Activated T-helper 1 cell treated with anti-CD3 and anti-CD28 coated beads, Interleukin-12 subunit alpha, Interleukin-12 subunit beta, Interleukin-2, Interleukin-4 antibody, amounts not matched to agents 30 ng/mL and 10 ng/mL and 1 ng/mL, durations not matched to agents 14 hours and 24 hours and 36 hours (primary cell): ENCODE measurements at regions of chr12 and their contacts with region 1.

Region 1: DNA sequence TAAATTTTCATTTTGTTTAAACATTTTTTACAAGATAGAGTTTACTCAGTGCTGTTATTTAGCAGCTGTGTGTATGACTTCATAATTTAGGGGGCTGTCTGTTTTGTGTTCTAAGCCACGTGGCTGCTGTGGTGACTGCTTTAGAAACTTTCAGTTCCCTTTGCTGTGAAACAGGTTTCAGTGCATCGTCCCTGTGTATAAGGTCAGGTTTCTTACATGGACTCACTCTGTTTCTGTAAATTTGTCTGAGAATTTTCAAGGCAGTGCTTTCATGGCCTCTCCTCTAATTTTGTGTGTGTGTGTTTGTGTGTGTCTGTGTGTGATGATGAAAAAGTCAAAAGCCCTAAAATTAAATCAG is 32.4 kb downstream of the BICD1 start:
- DNase-seq: peak; percentile 20
- H3K4me3 Mint-ChIP-seq: peak overlapping the region; percentile 70
- H3K27ac Mint-ChIP-seq: peak overlapping the region; percentile 4
- H3K4me1 Mint-ChIP-seq: peaks cover 39% of the 10 kb centered on the region
- H3K27me3 Mint-ChIP-seq: peaks cover 11% of the 10 kb centered on the region

Region 2: GRCh38 chr12:31456562-31456961 is 682.5 kb before region 1 on chr12:
- intact Hi-C with region 1: no loop called
- DNase-seq: no peak
- H3K4me3 Mint-ChIP-seq: no peak overlapping the region
- H3K27ac Mint-ChIP-seq: no peak overlapping the region
- H3K4me1 Mint-ChIP-seq: no peaks in the 10 kb centered on the region
- H3K27me3 Mint-ChIP-seq: peaks cover 2% of the 10 kb centered on the region

Region 3: DNA sequence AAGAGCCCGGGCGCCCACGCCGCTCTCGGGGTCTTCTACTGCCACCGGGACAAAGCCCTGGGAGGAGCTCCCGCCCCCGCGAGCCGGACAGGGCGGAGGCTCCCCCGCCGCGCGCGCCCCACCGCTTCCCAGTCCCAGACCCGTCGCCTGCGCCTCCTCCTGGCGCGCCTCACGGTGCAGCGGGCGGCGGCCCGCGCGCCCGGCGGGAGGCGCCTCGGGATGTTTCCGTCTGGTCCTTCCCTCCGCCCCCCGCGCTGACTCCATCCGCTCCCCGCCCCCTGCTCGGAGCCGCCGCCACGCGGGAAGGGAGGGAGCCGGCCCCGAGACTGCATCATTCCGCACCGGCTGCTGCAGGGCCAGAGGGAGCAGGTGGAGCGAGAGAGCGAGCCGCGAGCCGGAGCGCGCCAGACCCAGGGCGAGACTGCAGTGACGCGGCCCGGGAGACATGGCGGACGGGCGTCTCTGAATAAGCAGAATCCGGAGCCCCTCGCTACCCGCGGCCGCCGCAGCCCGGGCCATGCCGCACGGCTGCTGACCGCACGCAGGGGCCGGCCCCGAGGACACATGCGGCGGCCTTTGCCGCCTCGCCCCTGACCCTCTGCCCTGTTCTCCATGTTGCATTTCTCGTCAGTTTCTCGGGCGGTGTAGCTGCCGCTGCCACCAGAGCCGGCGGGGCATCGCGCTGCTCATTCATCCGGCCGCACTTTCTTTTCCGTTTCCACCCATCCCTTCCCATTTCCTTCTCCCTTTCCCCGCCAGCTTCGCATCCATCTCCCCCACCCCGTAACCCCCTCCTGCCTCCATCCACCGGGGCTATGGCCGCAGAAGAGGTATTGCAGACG is 32.3 kb before region 1 on chr12 and contains the start of gene BICD1:
- intact Hi-C with region 1: loop called (anchors 1 kb)
- DNase-seq: peak; percentile 76
- H3K4me3 Mint-ChIP-seq: peak within 1 kb of the TSS; percentile 98
- H3K27ac Mint-ChIP-seq: peak within 1 kb of the TSS; percentile 87
- H3K4me1 Mint-ChIP-seq: peaks cover 36% of the 10 kb centered on the region
- H3K27me3 Mint-ChIP-seq: peaks cover 19% of the 10 kb centered on the region
- total RNA-seq, gene BICD1: 20.9 and 22.2 TPM in 2 replicates

Region 4: GRCh38 chr12:32257695-32258496 is 118.9 kb after region 1 on chr12:
- intact Hi-C with region 1: loop called (anchors 5 kb)
- DNase-seq: no peak
- H3K4me3 Mint-ChIP-seq: no peak overlapping the region
- H3K27ac Mint-ChIP-seq: no peak overlapping the region
- H3K4me1 Mint-ChIP-seq: peaks cover 9% of the 10 kb centered on the region
- H3K27me3 Mint-ChIP-seq: no peaks in the 10 kb centered on the region

Region 5: DNA sequence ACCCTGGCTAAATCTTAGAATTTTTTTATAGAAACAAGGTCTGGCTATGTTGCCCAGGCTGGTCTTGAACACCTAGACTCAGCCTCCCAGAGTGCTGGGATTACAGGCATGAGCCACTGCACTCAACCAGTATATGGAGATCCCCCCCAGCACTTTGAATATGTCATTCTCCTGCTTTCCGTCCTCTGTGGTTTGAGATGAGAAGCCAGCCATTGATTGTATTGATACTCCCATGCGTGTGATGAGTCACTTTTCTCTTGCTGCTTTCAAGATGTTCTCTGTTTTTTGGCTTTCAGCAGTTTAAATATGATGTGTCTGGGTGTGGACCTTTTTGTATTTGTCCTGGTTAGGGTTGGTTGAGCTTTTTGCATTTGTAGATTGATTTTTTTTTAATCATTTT is 464.8 kb after region 1 on chr12:
- intact Hi-C with region 1: loop called (anchors 1 kb)
- DNase-seq: peak; percentile 56
- H3K4me3 Mint-ChIP-seq: no peak overlapping the region
- H3K27ac Mint-ChIP-seq: peak overlapping the region; percentile 65
- H3K4me1 Mint-ChIP-seq: peaks cover 18% of the 10 kb centered on the region
- H3K27me3 Mint-ChIP-seq: no peaks in the 10 kb centered on the region

Region 6: GRCh38 chr12:32679091-32679919 is 540.3 kb after region 1 on chr12 and contains the start of gene DNM1L:
- intact Hi-C with region 1: loop called (anchors 10 kb)
- DNase-seq: peak; percentile 90
- H3K4me3 Mint-ChIP-seq: peak within 1 kb of the TSS; percentile 95
- H3K27ac Mint-ChIP-seq: peak within 1 kb of the TSS; percentile 92
- H3K4me1 Mint-ChIP-seq: peaks cover 35% of the 10 kb centered on the region
- H3K27me3 Mint-ChIP-seq: no peaks in the 10 kb centered on the region
- total RNA-seq, gene DNM1L: 87.0 and 91.9 TPM in 2 replicates